Activated naive CD4-positive, alpha-beta T cell treated with anti-CD3 and anti-CD28 coated beads for 36 hours (primary cell): ENCODE measurements at regions of chr9 and their contacts with region 1.

Region 1: GRCh38 chr9:127423934-127424675 is at the start of gene ZNF79:
- DNase-seq: peak; percentile 94
- H3K4me3 Mint-ChIP-seq: peak within 1 kb of the TSS; percentile 98
- H3K27ac Mint-ChIP-seq: peak within 1 kb of the TSS; percentile 95
- H3K4me1 Mint-ChIP-seq: peaks cover 49% of the 10 kb centered on the region
- H3K27me3 Mint-ChIP-seq: no peaks in the 10 kb centered on the region
- total RNA-seq, gene ZNF79: 7.9 to 8.1 TPM

Region 2: GRCh38 chr9:126804696-126805545 is 619.2 kb before region 1 on chr9 and contains the start of gene ZBTB43:
- CTCF ChIA-PET with region 1: no interaction called
- intact Hi-C with region 1: loop called (anchors 5 kb)
- DNase-seq: peak; percentile 99
- H3K4me3 Mint-ChIP-seq: peak within 1 kb of the TSS; percentile 89
- H3K27ac Mint-ChIP-seq: peak within 1 kb of the TSS; percentile 95
- H3K4me1 Mint-ChIP-seq: peaks cover 30% of the 10 kb centered on the region
- H3K27me3 Mint-ChIP-seq: no peaks in the 10 kb centered on the region
- total RNA-seq, gene ZBTB43: 20.9 to 25.9 TPM

Region 3: DNA sequence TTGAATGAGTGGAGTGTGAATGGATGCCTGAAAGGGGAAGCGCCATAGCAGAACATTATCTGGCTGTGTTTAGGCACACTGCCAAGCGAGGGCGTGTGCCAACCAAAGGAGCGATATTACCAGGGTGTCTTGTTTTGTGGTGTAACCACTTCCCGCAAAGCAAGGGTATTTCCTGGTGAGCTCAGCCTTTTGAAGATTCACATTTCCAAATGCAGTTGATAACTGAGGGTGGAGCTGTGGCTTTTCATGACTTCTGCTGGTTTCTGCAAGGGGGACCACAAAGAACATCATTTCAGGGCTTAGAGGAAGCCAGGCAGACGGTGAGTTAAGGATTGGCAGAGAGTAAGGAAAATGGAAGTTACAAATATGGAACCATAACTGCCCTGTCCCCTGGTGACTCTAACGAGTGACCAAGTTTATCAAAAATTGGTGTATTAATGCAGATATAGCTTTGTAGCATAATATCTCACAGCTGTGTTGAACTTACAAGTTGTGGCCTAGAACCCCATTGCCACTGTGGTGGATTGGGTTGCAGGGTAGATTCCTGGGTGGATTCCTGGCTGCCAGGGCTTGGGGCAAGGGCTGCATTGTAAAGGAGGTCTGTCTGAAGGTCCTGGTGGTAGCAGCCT is 438.1 kb before region 1 on chr9:
- CTCF ChIA-PET with region 1: no interaction called
- intact Hi-C with region 1: loop called (anchors 2 kb)
- DNase-seq: peak; percentile 94
- H3K4me3 Mint-ChIP-seq: no peak overlapping the region
- H3K27ac Mint-ChIP-seq: peak overlapping the region; percentile 44
- H3K4me1 Mint-ChIP-seq: peaks cover 40% of the 10 kb centered on the region
- H3K27me3 Mint-ChIP-seq: peaks cover 75% of the 10 kb centered on the region

Region 4: DNA sequence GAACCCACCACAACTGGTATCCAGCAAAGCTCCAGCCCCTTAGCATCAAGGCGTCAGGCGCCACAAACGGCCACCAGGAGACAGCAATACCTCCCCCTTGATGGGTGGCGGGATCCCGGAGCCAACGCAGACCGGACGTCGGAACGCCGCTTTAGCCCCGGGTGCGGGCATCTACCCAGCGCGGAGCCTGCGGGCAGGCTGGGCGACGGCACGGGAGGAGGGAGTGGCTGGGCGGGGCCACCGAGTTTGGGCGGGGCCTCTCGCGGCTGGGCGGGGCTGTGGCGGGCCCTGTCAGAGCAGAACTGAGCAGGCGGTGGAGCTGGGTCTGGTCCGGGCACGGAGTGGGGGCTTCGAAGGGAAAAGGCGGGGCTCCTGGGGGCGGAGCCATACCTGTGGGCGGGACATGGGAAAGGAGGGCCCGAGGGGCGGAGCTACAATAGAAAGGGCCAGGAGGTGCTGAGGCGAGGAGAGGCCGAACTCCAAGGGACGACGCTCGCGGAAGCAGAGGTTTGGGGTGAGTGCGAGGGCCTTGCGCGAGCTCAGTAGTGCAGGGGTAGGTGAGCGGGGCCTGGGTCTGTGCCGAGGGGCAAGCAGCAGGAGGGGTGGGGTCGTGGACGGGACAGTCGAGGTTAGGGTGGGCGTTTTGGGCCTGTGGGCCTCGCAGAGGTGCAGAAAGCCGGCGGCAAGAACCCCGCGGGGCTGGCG is 199.8 kb before region 1 on chr9:
- CTCF ChIA-PET with region 1: no interaction called
- intact Hi-C with region 1: loop called (anchors 1 kb)
- DNase-seq: peak; percentile 85
- H3K4me3 Mint-ChIP-seq: peak overlapping the region; percentile 73
- H3K27ac Mint-ChIP-seq: no peak overlapping the region
- H3K4me1 Mint-ChIP-seq: peaks cover 28% of the 10 kb centered on the region
- H3K27me3 Mint-ChIP-seq: peaks cover 9% of the 10 kb centered on the region

Region 5: GRCh38 chr9:127388037-127388855 is 35.9 kb before region 1 on chr9:
- CTCF ChIA-PET with region 1: interaction called, 3 read pairs
- intact Hi-C with region 1: loop called (anchors 1 kb)
- DNase-seq: peak; percentile 97
- H3K4me3 Mint-ChIP-seq: peak overlapping the region; percentile 31
- H3K27ac Mint-ChIP-seq: peak overlapping the region; percentile 84
- H3K4me1 Mint-ChIP-seq: peaks cover 33% of the 10 kb centered on the region
- H3K27me3 Mint-ChIP-seq: peaks cover 73% of the 10 kb centered on the region

Region 6: DNA sequence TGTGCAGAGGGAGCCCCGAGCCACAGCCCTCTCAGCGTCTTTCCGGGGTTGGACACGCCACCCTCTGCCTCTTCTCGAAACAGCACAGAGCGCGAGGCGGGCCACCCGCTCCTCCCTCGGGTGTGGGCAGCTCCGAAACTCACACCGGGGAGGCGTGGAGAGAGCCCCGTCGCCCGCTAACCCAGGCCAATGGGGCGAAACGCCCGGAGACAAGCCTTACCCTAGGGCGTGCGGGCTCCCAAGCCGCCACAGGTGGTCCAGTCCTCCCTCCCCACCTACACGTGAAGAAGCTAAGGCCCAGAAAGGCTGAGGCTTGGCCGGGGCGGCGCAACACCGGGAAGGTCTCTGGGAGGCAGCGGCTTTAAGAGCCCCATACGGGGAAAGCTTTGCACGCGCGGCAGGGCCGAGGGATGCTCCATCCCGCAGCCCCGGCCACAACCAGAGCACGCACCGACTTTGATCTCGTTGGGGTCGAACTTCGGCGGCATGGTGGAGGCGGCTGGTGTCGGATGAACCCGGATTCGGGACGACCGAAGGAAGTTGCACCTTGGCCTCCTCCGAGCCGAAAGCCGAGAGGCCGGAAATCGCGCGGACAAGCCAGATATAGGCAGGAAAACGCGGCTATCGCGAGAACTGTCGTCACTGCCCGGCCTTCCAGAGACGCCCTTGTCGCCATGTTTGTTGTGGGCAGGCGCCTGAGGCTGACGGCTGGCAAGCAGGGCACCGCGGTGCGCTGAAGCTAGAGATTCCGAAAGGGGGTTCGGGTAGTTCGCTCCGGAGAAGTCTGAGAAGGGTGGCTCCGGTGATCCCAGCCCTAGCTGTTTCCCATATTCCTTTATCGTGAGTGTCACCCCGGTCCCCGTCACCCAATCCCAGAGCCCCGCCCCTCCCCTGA is 27.0 kb after region 1 on chr9 and contains the starts of genes LRSAM1 and RPL12:
- CTCF ChIA-PET with region 1: interaction called, 5 read pairs
- intact Hi-C with region 1: loop called (anchors 1 kb)
- DNase-seq: peak; percentile 97
- H3K4me3 Mint-ChIP-seq: peak within 1 kb of the TSS; percentile 89
- H3K27ac Mint-ChIP-seq: peak within 1 kb of the TSS; percentile 95
- H3K4me1 Mint-ChIP-seq: peaks cover 42% of the 10 kb centered on the region
- H3K27me3 Mint-ChIP-seq: no peaks in the 10 kb centered on the region
- total RNA-seq, gene LRSAM1: 8.8 to 9.9 TPM
- total RNA-seq, gene RPL12: 3,038 to 3,119 TPM

Region 7: DNA sequence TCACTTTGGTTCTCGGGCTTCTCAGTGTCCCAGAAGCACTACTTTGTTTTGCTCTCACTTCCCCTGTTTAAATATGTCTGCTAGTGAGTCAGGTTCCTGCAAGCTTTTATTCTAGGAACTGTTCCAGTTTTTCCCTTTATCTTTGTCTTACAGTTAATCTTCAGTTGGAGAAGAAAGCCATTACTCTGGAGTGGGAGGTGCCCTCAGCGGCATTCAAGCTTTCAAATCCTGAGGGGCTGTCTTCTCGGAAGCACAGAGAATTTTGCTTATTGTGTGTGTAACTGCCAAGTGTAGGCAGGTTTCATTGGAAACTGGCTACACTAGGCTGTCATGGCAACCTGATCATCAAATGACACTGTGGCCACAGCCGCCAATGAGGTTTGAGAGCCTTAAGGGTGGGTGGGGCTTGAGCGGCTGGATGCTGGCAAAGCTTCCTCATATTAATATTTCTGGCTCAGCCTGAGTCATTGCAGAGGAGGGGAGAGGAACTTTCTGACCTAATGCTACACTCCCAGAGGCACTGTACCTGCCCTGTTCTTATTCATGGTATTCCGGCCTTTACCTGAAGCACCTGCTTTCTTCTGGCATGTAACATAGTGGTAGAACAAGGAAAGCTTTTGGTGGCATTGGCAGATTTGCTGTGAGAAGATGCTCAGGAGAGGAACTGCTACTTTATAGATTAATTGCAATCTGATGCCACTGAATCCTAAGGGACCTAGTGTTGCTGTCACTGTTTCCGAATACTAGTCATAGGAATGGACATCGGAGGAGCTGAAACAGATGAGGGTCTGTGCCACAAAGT is 670.3 kb after region 1 on chr9:
- CTCF ChIA-PET with region 1: no interaction called
- intact Hi-C with region 1: no loop called
- DNase-seq: peak; percentile 91
- H3K4me3 Mint-ChIP-seq: peak overlapping the region; percentile 65
- H3K27ac Mint-ChIP-seq: peak overlapping the region; percentile 95
- H3K4me1 Mint-ChIP-seq: peaks cover 87% of the 10 kb centered on the region
- H3K27me3 Mint-ChIP-seq: no peaks in the 10 kb centered on the region